Activated CD4-positive, alpha-beta T cell treated with anti-CD3 and anti-CD28 coated beads for 36 hours (primary cell): ENCODE measurements at regions of chr10 and their contacts with region 1.

Region 1: GRCh38 chr10:24503461-24504320 is 220.0 kb downstream of the ARHGAP21 start:
- DNase-seq: peak; percentile 63
- ATAC-seq: peak; percentile 57
- H3K4me3 Mint-ChIP-seq: no peak overlapping the region
- H3K27ac Mint-ChIP-seq: no peak overlapping the region
- H3K4me1 Mint-ChIP-seq: no peaks in the 10 kb centered on the region
- H3K27me3 Mint-ChIP-seq: peaks cover 14% of the 10 kb centered on the region

Region 2: DNA sequence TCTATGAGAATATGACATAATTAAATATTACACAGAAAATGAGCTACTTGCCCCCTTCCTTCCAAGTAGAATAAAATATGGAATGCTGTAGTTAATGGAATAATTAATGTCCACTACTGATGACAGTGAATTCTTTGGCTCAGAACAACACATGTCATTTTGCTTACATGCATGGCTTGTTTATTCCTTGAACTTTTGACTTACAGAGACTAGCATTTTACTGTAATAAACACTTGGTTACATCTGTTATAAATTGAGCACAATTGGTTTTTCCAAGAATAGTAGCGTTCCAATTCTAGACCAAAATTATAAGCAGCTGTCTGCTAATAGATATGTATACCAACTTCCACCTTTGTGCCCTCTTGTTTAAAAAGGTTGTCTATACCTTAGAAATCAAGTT is 778.1 kb before region 1 on chr10:
- CTCF ChIA-PET with region 1: no interaction called
- POLR2A ChIA-PET with region 1: no interaction called
- intact Hi-C with region 1: loop called in 1 of 2 experiments (anchors 10 kb)
- DNase-seq: no peak
- ATAC-seq: no peak
- H3K4me3 Mint-ChIP-seq: no peak overlapping the region
- H3K27ac Mint-ChIP-seq: no peak overlapping the region
- H3K4me1 Mint-ChIP-seq: peaks cover 3% of the 10 kb centered on the region
- H3K27me3 Mint-ChIP-seq: peaks cover 6% of the 10 kb centered on the region

Region 3: GRCh38 chr10:24201503-24202180 is 302.0 kb before region 1 on chr10:
- CTCF ChIA-PET with region 1: no interaction called
- POLR2A ChIA-PET with region 1: no interaction called
- intact Hi-C with region 1: loop called in 1 of 2 experiments (anchors 5 kb)
- DNase-seq: no peak
- ATAC-seq: no peak
- H3K4me3 Mint-ChIP-seq: no peak overlapping the region
- H3K27ac Mint-ChIP-seq: no peak overlapping the region
- H3K4me1 Mint-ChIP-seq: peaks cover 8% of the 10 kb centered on the region
- H3K27me3 Mint-ChIP-seq: peaks cover 20% of the 10 kb centered on the region

Region 4: GRCh38 chr10:24360282-24361127 is 143.2 kb before region 1 on chr10:
- CTCF ChIA-PET with region 1: no interaction called
- POLR2A ChIA-PET with region 1: no interaction called
- intact Hi-C with region 1: loop called (anchors 1 to 5 kb)
- DNase-seq: peak; percentile 71
- ATAC-seq: no peak
- H3K4me3 Mint-ChIP-seq: no peak overlapping the region
- H3K27ac Mint-ChIP-seq: no peak overlapping the region
- H3K4me1 Mint-ChIP-seq: no peaks in the 10 kb centered on the region
- H3K27me3 Mint-ChIP-seq: peaks cover 5% of the 10 kb centered on the region